Activated CD4-positive, alpha-beta memory T cell treated with anti-CD3 and anti-CD28 coated beads, Interleukin-2, amount 10 ng/mL, durations not matched to agents 7 days and 5 days (primary cell): ENCODE measurements at regions of chr22 and their contacts with region 1.

Region 1: DNA sequence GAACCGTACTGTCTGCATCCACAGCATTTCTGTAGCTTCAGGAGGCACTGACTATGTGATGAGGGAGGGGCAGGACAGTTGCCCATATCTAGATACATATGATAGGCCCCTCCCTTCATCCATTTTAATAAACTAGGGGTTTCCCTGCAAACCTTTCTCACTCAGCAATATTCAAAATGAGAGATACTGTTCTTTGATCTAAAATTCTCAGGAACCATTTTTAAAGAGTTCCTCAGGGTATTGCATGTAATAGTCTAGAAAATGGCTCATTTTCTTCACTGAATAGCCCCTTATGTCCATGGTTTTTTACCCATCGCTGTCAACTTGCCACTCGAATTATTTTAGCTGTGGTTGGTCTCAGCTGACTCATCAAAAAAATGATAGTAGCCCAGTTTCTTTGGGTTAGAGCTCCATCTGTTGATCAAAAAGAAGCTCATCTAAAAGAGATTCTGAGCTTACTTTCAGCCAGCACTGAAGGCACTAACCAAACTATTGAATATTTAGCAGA is 37.0 kb upstream of the DNAJB7 start:
- DNase-seq: no peak
- H3K4me3 Mint-ChIP-seq: no peak overlapping the region
- H3K27ac Mint-ChIP-seq: peak overlapping the region; percentile 52
- H3K4me1 Mint-ChIP-seq: peaks cover 21% of the 10 kb centered on the region
- H3K27me3 Mint-ChIP-seq: no peaks in the 10 kb centered on the region

Region 2: GRCh38 chr22:40436505-40437451 is 462.1 kb before region 1 on chr22:
- CTCF ChIA-PET with region 1: interaction called, 24 read pairs
- POLR2A ChIA-PET with region 1: interaction called, 5 read pairs
- DNase-seq: no peak
- H3K4me3 Mint-ChIP-seq: no peak overlapping the region
- H3K27ac Mint-ChIP-seq: no peak overlapping the region
- H3K4me1 Mint-ChIP-seq: peaks cover 40% of the 10 kb centered on the region
- H3K27me3 Mint-ChIP-seq: no peaks in the 10 kb centered on the region

Region 3: DNA sequence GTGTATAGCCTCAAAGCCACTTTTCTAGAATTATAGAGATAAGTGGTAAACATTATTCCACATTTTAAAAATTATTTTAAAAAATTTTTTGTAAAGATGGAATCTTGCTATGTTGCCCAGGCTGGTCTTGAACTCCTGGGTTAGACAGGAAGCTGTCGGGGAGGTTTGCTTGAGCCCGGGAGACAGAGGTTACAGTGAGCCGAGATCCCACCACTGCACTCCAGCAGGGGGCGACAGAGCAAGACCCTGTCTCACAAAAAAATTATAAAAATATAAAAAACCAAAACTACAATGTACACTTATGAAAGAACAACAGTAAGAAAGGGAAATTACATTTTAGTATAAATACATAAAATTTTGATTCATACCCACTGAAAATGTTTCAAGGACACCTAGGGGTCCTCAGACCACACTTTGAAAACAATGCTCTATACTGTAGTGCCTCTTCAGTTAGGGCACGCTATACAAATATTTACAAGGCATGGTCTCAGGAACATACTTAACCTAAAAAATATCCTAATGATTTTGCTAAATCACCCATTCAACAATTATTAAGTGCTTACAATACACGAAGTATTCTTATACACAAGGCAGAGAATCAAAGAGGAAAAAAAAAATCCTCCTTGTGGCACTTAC is 373.5 kb before region 1 on chr22:
- CTCF ChIA-PET with region 1: interaction called, 12 read pairs
- POLR2A ChIA-PET with region 1: no interaction called
- DNase-seq: peak; percentile 73
- H3K4me3 Mint-ChIP-seq: no peak overlapping the region
- H3K27ac Mint-ChIP-seq: no peak overlapping the region
- H3K4me1 Mint-ChIP-seq: peaks cover 23% of the 10 kb centered on the region
- H3K27me3 Mint-ChIP-seq: no peaks in the 10 kb centered on the region

Region 4: GRCh38 chr22:40651563-40652501 is 247.1 kb before region 1 on chr22:
- CTCF ChIA-PET with region 1: interaction called, 22 read pairs
- POLR2A ChIA-PET with region 1: no interaction called
- DNase-seq: peak; percentile 87
- H3K4me3 Mint-ChIP-seq: peak overlapping the region; percentile 72
- H3K27ac Mint-ChIP-seq: peak overlapping the region; percentile 83
- H3K4me1 Mint-ChIP-seq: peaks cover 29% of the 10 kb centered on the region
- H3K27me3 Mint-ChIP-seq: no peaks in the 10 kb centered on the region

Region 5: DNA sequence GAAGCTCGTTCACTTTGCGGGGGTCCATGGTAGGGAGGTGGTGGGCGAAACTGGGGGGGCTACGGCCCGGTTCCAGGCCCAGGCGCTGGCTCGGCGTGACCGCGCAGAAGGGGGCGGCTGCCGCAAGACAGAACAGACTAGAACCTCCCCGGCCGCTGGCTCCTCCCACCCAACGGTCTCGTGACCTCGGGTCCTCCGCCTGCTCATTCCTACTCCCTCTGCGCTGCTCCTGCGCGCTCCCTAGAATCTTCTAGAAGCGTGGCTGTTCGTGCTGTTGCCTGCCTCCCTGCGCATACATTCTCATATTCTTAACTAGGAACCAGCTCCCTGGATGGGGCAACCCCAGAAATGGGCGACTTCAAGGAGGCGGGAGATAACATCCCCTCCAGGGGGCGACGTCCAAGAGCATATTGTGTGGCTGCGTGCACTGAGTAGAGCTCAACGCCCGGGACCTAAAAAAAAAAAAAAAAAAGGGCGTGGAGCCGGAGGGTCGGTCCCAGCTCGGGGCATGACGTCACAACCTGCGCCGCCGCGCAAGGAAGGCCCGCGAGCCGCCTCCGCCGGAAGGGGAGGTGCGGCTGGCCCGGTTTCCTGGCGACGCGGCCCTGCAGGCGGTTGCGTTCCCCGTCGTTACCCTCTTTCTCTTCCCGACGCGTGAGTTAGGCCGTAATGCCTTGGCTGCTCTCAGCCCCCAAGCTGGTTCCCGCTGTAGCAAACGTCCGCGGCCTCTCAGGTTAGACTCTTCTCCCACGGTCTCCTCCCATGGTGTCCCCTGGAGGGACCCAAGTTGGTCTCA is 42.2 kb before region 1 on chr22 and contains the starts of genes ST13 and XPNPEP3:
- CTCF ChIA-PET with region 1: interaction called, 20 read pairs
- POLR2A ChIA-PET with region 1: interaction called, 5 read pairs
- DNase-seq: peak; percentile 97
- H3K4me3 Mint-ChIP-seq: peak within 1 kb of the TSS; percentile 95
- H3K27ac Mint-ChIP-seq: peak within 1 kb of the TSS; percentile 99
- H3K4me1 Mint-ChIP-seq: peaks cover 50% of the 10 kb centered on the region
- H3K27me3 Mint-ChIP-seq: no peaks in the 10 kb centered on the region
- total RNA-seq, gene ST13: 138 to 142 TPM
- total RNA-seq, gene XPNPEP3: 11.3 to 13.2 TPM

Region 6: DNA sequence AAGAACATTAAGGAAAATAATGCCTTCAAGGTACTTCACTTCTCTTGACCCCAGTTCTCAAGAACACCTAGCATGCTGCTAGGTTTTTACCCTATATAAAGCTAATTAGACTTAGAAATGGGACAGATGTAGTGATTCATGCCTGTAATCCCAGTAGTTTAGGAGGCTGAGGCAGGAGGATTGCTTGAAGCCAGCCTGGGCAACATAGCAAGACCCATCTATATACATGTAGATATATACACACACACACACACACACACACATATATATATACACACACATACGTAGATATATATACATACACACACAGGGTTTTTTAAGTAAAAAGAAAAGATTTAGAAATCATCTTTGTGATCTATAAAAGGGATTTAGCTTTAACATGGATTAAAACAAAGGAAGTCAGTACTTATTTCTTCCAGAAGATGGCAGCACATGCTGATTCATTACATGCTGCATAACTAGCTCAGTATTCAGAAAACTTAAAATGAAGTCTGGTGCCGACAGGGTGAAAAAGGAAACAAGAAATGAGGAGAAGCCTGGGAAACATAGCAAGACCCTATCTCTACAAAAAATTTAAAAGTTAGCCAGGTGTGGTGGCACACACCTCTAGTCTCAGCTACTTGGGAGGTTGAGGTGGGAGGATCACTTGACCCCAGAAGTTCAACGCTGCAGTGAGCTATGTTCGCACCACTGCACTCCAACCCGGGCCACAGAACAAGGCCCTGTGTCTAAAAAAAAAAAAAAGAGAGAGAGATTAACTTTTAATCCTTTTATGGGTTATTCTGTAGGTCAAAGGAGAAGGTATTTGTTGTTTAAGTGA is 23.8 kb after region 1 on chr22:
- CTCF ChIA-PET with region 1: interaction called, 16 read pairs
- POLR2A ChIA-PET with region 1: no interaction called
- DNase-seq: no peak
- H3K4me3 Mint-ChIP-seq: no peak overlapping the region
- H3K27ac Mint-ChIP-seq: peak overlapping the region; percentile 31
- H3K4me1 Mint-ChIP-seq: peaks cover 4% of the 10 kb centered on the region
- H3K27me3 Mint-ChIP-seq: no peaks in the 10 kb centered on the region